ENCODE measurements at regions of chr3 and their contacts with region 1.

Region 1: DNA sequence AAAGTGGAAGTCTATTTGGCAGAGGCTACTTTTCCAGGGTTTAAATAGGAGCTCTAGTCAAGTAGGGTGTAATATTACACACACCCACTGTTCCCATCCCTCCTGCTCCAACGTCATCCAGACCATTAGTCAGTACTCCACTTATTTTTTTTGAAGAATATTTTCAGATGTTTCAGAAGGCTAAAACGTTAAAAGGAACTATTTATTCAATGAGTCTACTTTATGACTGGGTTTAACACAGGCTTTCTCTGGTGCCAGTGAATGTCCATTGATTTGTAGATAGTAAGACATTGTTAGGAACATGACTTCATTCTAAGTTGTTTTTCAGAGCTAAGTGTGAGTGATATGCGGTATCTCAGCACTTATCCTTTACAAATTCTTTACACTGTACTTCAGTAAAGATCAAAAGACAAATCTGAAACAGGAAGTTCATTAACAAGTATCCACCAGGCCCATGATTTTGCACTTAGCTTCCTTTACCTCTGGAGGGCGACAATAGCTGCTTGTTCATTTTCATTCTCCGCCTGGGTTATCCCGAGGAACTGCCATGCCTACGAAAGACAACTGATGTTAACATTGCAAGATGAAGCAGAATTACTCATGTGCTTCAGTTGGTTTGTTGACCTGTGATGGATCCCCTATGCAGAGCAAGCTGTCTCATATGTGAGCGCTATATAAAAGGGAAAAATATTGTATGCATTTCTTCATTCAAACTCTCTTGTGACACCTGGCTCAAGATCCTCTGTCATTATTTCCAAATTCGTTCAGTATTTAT is 158.7 kb downstream of the USP13 start:
- DNase-seq: peak; percentile 55
- H3K4me3 ChIP-seq: no peak overlapping the region
- H3K27ac ChIP-seq: no peak overlapping the region
- H3K4me1 ChIP-seq: no peaks in the 10 kb centered on the region
- H3K27me3 ChIP-seq: no peaks in the 10 kb centered on the region
- CTCF ChIP-seq: peak; percentile 53 to 59
- POLR2A ChIP-seq: no peak

Region 2: DNA sequence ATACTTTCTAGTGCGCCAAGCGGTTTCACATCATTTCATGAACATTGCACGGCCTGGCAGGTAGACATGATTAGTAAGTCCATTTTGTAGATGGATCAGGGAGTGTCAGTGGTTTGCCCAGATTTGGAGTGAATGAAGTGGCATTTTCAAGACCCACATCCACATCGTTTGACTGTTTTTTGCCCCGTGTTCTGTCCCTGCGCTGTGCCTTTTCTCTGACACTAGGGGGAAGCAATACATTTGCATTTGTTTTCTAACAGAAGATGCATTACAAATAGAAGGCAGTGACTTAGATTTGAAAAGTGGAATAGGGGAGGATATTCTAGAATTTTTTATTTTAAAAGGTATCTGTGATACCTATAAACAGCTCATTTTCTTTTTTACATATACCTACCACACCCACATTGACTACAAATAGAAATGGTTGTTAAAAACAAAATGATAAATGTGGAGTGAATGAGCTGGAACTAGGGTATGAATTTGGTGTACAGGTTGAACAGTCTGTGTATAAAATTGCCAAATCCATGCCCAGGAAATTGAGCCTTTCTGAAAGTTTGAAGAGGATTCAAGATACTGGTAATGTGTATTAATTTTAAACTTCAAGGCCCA is 60.7 kb before region 1 on chr3:
- CTCF ChIA-PET with region 1: interaction called, 12 read pairs
- POLR2A ChIA-PET with region 1: no interaction called
- dilution Hi-C with region 1: no loop called
- intact Hi-C with region 1: no loop called
- DNase-seq: peak; percentile 43
- H3K4me3 ChIP-seq: no peak overlapping the region
- H3K27ac ChIP-seq: no peak overlapping the region
- H3K4me1 ChIP-seq: no peaks in the 10 kb centered on the region
- H3K27me3 ChIP-seq: no peaks in the 10 kb centered on the region
- CTCF ChIP-seq: peak; percentile 54 to 62
- POLR2A ChIP-seq: no peak

Region 3: GRCh38 chr3:179801263-179801662 is 10.2 kb before region 1 on chr3:
- CTCF ChIA-PET with region 1: interaction called, 11 read pairs
- POLR2A ChIA-PET with region 1: no interaction called
- dilution Hi-C with region 1: no loop called
- intact Hi-C with region 1: no loop called
- DNase-seq: no peak
- H3K4me3 ChIP-seq: no peak overlapping the region
- H3K27ac ChIP-seq: no peak overlapping the region
- H3K4me1 ChIP-seq: no peaks in the 10 kb centered on the region
- H3K27me3 ChIP-seq: no peaks in the 10 kb centered on the region
- CTCF ChIP-seq: no peak
- POLR2A ChIP-seq: no peak

Region 4: DNA sequence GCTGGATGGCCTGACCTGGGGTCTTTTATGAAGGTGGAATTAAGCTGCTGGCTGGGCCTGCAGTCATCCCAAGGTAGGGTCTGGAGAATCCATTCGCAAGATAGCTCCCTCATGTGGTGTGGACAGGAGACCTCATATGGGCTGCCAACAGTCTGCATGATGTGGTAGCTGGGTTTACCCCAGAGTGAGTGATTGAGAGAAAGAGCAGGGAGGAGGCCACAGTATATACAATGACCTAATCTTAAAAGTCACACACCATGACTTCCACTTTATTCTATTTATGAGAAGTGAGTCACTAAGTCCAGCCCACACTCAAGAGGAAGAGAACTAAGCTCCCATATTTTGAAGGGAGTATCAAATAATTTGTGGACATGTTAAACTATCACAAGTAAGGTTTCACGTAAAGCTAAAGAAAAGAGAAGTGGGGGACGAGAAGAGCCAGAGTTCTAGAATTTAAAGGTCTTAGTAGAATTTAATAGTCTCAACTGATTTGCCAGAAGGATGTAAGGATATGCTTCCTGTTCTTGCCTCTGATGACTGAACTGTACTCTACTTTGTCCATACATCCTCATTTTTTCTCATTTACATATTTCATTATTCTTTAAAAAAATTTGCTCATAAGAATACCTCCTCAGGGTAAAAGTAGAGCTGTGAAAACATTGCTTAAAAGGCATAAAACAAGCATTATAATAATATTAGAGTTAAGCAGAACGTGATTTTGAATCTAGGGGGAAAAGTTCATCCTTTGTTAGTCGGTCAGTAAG is 40.8 kb after region 1 on chr3:
- CTCF ChIA-PET with region 1: interaction called, 17 read pairs
- POLR2A ChIA-PET with region 1: no interaction called
- dilution Hi-C with region 1: no loop called
- intact Hi-C with region 1: no loop called
- DNase-seq: peak; percentile 5
- H3K4me3 ChIP-seq: no peak overlapping the region
- H3K27ac ChIP-seq: no peak overlapping the region
- H3K4me1 ChIP-seq: no peaks in the 10 kb centered on the region
- H3K27me3 ChIP-seq: no peaks in the 10 kb centered on the region
- CTCF ChIP-seq: peak in 1 of 2 donors; percentile 18
- POLR2A ChIP-seq: no peak

Region 5: GRCh38 chr3:179929091-179929529 is 117.6 kb after region 1 on chr3:
- CTCF ChIA-PET with region 1: interaction called, 21 read pairs
- POLR2A ChIA-PET with region 1: no interaction called
- dilution Hi-C with region 1: no loop called
- intact Hi-C with region 1: loop called (anchors 2 kb)
- DNase-seq: peak; percentile 52
- H3K4me3 ChIP-seq: no peak overlapping the region
- H3K27ac ChIP-seq: no peak overlapping the region
- H3K4me1 ChIP-seq: no peaks in the 10 kb centered on the region
- H3K27me3 ChIP-seq: no peaks in the 10 kb centered on the region
- CTCF ChIP-seq: peak; percentile 59 to 66
- POLR2A ChIP-seq: no peak

Region 6: GRCh38 chr3:180594631-180595558 is 783.4 kb after region 1 on chr3:
- CTCF ChIA-PET with region 1: interaction called, 34 read pairs
- POLR2A ChIA-PET with region 1: no interaction called
- dilution Hi-C with region 1: no loop called
- intact Hi-C with region 1: loop called (anchors 1 kb)
- DNase-seq: peak; percentile 55
- H3K4me3 ChIP-seq: no peak overlapping the region
- H3K27ac ChIP-seq: no peak overlapping the region
- H3K4me1 ChIP-seq: no peaks in the 10 kb centered on the region
- H3K27me3 ChIP-seq: peaks cover 0 to 2% of the 10 kb centered on the region in 2 experiments
- CTCF ChIP-seq: peak; percentile 13 to 28
- POLR2A ChIP-seq: no peak

Region 7: DNA sequence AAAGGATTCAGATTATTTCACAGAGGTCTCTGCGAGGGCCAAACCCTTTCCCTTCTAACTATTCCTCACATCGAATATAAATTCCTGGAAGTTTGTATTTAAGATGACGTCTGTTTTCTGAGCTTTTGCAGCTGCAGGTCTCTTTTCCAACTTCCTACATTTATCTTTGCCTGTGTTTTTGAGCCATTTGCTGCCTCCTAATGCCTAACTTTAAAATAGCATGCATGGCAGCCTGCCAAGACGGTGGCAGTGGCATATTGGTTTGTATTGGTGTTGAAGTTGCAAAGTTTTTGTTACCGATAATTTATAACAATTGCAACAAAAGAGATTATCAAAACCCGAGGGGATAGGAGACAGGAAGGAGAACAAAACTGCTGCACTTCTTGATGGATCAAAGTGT is 1365.1 kb after region 1 on chr3:
- CTCF ChIA-PET with region 1: no interaction called
- POLR2A ChIA-PET with region 1: no interaction called
- dilution Hi-C with region 1: no loop called
- intact Hi-C with region 1: loop called (anchors 5 kb)
- DNase-seq: peak; percentile 79
- H3K4me3 ChIP-seq: no peak overlapping the region
- H3K27ac ChIP-seq: no peak overlapping the region
- H3K4me1 ChIP-seq: no peaks in the 10 kb centered on the region
- H3K27me3 ChIP-seq: peaks cover 0 to 3% of the 10 kb centered on the region in 2 experiments
- CTCF ChIP-seq: peak; percentile 37 to 53
- POLR2A ChIP-seq: no peak